B cell (primary cell): ENCODE measurements at regions of chr16 and their contacts with region 1.

Region 1: DNA sequence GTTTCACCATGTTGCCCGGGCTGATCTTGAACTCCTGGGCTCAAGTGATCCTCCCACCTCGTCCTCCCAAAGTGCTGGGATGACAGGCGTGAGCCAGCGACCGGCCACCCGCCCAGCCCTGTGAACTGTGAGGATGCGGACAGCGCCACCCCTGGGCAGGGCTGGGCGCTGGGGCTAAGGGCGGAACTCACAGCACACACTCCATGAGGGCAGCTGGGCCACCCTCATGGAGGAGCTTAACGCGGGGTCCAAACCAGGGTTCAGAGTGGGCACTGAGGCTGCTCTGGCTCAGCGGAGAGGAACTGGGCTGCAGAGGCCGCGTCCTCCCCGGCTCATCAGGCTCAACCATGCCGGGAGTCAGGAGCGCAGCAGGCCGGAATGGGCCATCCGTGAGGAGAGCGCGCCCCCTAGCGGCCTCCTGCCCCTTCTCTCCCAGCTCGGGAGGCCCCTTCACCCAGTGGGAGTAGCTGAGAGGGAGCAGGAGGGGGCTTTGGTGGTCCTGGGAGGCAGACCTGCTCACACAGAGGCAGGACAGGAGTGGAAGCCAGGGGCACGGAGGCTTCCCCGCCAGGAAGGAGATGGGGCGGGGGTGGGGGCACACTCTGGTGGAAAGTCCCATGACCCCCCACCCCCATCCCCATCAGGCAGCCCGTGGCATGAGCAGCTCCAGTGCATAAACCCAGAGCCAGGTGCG is 13.8 kb downstream of the CORO7 start:
- DNase-seq: peak; percentile 79
- ATAC-seq: peak; percentile 75
- H3K4me3 ChIP-seq: no peak overlapping the region
- H3K4me3 Mint-ChIP-seq: no peak overlapping the region
- H3K27ac ChIP-seq: no peak overlapping the region
- H3K27ac Mint-ChIP-seq: no peak overlapping the region
- H3K4me1 ChIP-seq: peaks cover 0 to 6% of the 10 kb centered on the region in 2 donors
- H3K4me1 Mint-ChIP-seq: peaks cover 10% of the 10 kb centered on the region
- H3K27me3 ChIP-seq: no peaks in the 10 kb centered on the region
- H3K27me3 Mint-ChIP-seq: no peaks in the 10 kb centered on the region
- CTCF ChIP-seq: peak; percentile 91

Region 2: GRCh38 chr16:4176612-4177417 is 225.8 kb before region 1 on chr16:
- CTCF ChIA-PET with region 1: no interaction called
- POLR2A ChIA-PET with region 1: no interaction called
- intact Hi-C with region 1: no loop called
- DNase-seq: peak; percentile 24
- ATAC-seq: peak; percentile 98
- H3K4me3 ChIP-seq: no peak overlapping the region
- H3K4me3 Mint-ChIP-seq: no peak overlapping the region
- H3K27ac ChIP-seq: no peak overlapping the region
- H3K27ac Mint-ChIP-seq: no peak overlapping the region
- H3K4me1 ChIP-seq: peaks cover 0 to 6% of the 10 kb centered on the region in 2 donors
- H3K4me1 Mint-ChIP-seq: peaks cover 7% of the 10 kb centered on the region
- H3K27me3 ChIP-seq: peaks cover 0 to 5% (median 0%) of the 10 kb centered on the region in 4 experiments
- H3K27me3 Mint-ChIP-seq: peaks cover 23% of the 10 kb centered on the region
- CTCF ChIP-seq: no peak

Region 3: GRCh38 chr16:4200000-4200780 is 202.4 kb before region 1 on chr16:
- CTCF ChIA-PET with region 1: interaction called, 7 read pairs
- POLR2A ChIA-PET with region 1: no interaction called
- intact Hi-C with region 1: loop called (anchors 5 kb)
- DNase-seq: peak; percentile 38
- ATAC-seq: no peak
- H3K4me3 ChIP-seq: no peak overlapping the region
- H3K4me3 Mint-ChIP-seq: no peak overlapping the region
- H3K27ac ChIP-seq: no peak overlapping the region
- H3K27ac Mint-ChIP-seq: no peak overlapping the region
- H3K4me1 ChIP-seq: no peaks in the 10 kb centered on the region
- H3K4me1 Mint-ChIP-seq: peaks cover 3% of the 10 kb centered on the region
- H3K27me3 ChIP-seq: no peaks in the 10 kb centered on the region
- H3K27me3 Mint-ChIP-seq: peaks cover 7% of the 10 kb centered on the region
- CTCF ChIP-seq: no peak

Region 4: DNA sequence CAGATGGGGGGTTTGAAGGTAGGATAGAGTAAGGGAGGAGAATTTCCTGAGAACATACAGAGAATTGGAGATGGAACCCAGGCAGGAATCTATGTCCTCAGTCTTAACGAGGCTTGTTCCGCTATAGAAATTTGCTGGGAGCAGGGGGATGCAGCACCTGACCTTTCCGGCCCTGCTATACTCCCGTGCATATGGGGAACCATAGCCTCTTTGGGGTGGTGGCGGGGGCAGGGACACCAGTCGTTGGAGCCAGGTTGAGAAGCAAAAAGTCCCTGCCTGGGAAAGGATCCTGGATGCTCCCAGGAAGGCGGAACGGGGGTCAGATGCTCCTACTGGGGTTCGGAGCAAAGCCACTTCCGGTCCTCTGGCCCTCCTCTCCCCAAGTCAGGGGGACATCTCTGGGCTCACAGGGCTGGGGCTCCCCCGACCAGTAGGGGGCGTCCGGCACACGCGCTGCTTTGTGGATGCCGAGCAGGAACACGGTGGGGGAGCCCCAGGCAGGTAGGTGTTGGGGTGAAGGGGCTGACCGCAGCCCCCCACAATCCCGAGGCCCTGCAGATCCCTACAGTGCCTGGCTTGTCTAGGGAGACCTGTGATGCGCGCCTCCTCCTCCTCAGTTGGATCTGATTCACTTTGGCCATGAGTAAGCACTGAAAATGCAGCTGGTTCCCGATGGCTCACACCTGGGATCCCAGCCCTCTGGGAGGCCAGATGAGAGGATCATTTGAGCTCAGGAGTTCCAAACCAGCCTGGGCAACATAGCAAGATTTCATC is 114.3 kb before region 1 on chr16:
- CTCF ChIA-PET with region 1: interaction called, 37 read pairs
- POLR2A ChIA-PET with region 1: no interaction called
- intact Hi-C with region 1: loop called (anchors 1 kb)
- DNase-seq: peak; percentile 87
- ATAC-seq: peak; percentile 98
- H3K4me3 ChIP-seq: no peak overlapping the region
- H3K4me3 Mint-ChIP-seq: no peak overlapping the region
- H3K27ac ChIP-seq: no peak overlapping the region
- H3K27ac Mint-ChIP-seq: no peak overlapping the region
- H3K4me1 ChIP-seq: peaks cover 7 to 8% of the 10 kb centered on the region in 2 donors
- H3K4me1 Mint-ChIP-seq: peaks cover 6% of the 10 kb centered on the region
- H3K27me3 ChIP-seq: peaks cover 0 to 3% (median 0%) of the 10 kb centered on the region in 4 experiments
- H3K27me3 Mint-ChIP-seq: peaks cover 20% of the 10 kb centered on the region
- CTCF ChIP-seq: peak; percentile 97

Region 5: DNA sequence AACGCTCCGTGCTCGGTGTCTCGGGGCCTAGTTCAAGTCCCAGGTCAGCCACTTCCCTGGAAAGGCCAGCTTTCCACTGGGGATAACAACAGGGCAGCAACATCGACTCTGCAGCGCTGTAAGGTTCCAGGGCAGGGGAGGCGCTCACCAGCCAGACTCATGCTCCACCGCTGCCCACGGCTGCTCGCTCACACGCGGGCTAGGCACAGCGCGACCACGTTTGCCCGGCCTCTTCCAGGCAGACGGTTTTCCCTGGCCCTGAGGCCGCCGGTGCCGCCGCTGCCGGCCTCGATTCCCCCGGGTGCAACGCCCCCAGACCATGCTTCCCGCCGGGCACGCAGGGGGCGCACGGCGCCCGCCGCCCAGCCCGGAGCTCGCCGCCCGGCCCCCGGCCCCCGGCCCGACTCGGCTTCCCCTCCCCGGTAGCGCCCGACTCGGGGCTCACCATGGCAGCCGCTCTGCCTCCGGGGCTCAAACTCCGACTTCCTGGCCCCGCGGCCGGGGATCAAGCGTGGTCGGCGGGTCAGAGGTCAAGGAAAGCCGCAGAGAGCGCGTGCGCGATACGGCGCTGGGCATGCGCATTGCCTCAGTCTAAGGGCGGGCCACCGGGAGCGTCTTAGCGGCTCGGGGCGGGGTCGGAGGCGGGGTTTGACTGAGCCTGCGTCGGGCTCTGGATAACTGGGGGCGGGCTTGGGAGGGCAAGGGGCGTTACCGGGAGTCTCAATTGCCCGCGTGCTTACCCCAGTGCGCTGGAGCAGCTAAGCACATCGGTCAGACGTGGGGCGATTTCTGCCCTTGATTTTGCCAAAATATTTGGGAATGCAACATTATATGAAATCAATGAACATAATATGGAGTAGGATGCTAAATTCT is 51.6 kb before region 1 on chr16 and contains the start of gene PAM16:
- CTCF ChIA-PET with region 1: interaction called, 26 read pairs
- POLR2A ChIA-PET with region 1: no interaction called
- intact Hi-C with region 1: no loop called
- DNase-seq: peak; percentile 97
- ATAC-seq: peak; percentile 92
- H3K4me3 ChIP-seq: peak within 1 kb of the TSS; percentile 56 to 84 (median 81)
- H3K4me3 Mint-ChIP-seq: peak within 1 kb of the TSS; percentile 96
- H3K27ac ChIP-seq: peak within 1 kb of the TSS; percentile 57 to 78
- H3K27ac Mint-ChIP-seq: peak within 1 kb of the TSS; percentile 95
- H3K4me1 ChIP-seq: peaks cover 9 to 17% of the 10 kb centered on the region in 2 donors
- H3K4me1 Mint-ChIP-seq: peaks cover 22% of the 10 kb centered on the region
- H3K27me3 ChIP-seq: no peaks in the 10 kb centered on the region
- H3K27me3 Mint-ChIP-seq: no peaks in the 10 kb centered on the region
- CTCF ChIP-seq: peak; percentile 33
- total RNA-seq, gene PAM16: 56.6 and 57.3 TPM in 2 replicates

Region 6: GRCh38 chr16:4365014-4365406 is 37.6 kb before region 1 on chr16:
- CTCF ChIA-PET with region 1: interaction called, 112 read pairs
- POLR2A ChIA-PET with region 1: interaction called, 11 read pairs
- intact Hi-C with region 1: loop called (anchors 1 kb)
- DNase-seq: peak; percentile 86
- ATAC-seq: peak; percentile 89
- H3K4me3 ChIP-seq: no peak overlapping the region
- H3K4me3 Mint-ChIP-seq: peak overlapping the region; percentile 64
- H3K27ac ChIP-seq: peak overlapping the region; percentile 27 to 37
- H3K27ac Mint-ChIP-seq: peak overlapping the region; percentile 78
- H3K4me1 ChIP-seq: peaks cover 6 to 42% of the 10 kb centered on the region in 2 donors
- H3K4me1 Mint-ChIP-seq: peaks cover 25% of the 10 kb centered on the region
- H3K27me3 ChIP-seq: no peaks in the 10 kb centered on the region
- H3K27me3 Mint-ChIP-seq: no peaks in the 10 kb centered on the region
- CTCF ChIP-seq: no peak

Region 7: DNA sequence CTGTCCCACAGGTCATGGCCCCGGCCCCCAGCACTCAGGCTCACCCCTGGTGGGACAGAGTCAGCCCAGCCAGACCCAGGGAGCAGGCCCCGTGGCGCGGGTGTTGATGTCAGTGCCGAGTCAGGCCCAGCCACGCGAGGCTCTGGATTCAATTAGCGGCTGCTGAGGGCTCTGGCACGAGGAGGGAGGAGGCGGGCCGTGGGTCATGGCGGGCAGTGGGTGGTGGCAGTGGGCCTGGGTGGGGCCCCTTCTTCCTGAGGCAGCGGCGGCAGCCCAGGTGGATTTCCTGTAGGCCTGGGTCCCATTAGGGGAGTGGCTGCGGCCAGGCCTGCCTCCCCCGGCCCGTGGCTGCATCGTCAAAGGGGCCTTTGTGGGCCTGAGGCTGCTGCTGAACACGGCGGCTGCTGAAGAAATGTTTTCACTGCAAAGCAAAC is 18.1 kb before region 1 on chr16:
- CTCF ChIA-PET with region 1: interaction called, 27 read pairs
- POLR2A ChIA-PET with region 1: no interaction called
- intact Hi-C with region 1: no loop called
- DNase-seq: no peak
- ATAC-seq: no peak
- H3K4me3 ChIP-seq: no peak overlapping the region
- H3K4me3 Mint-ChIP-seq: no peak overlapping the region
- H3K27ac ChIP-seq: no peak overlapping the region
- H3K27ac Mint-ChIP-seq: no peak overlapping the region
- H3K4me1 ChIP-seq: no peaks in the 10 kb centered on the region
- H3K4me1 Mint-ChIP-seq: no peaks in the 10 kb centered on the region
- H3K27me3 ChIP-seq: no peaks in the 10 kb centered on the region
- H3K27me3 Mint-ChIP-seq: no peaks in the 10 kb centered on the region
- CTCF ChIP-seq: no peak

Region 8: GRCh38 chr16:4550591-4550990 is 148.0 kb after region 1 on chr16:
- CTCF ChIA-PET with region 1: interaction called, 22 read pairs
- POLR2A ChIA-PET with region 1: no interaction called
- intact Hi-C with region 1: no loop called
- DNase-seq: no peak
- ATAC-seq: no peak
- H3K4me3 ChIP-seq: no peak overlapping the region
- H3K4me3 Mint-ChIP-seq: no peak overlapping the region
- H3K27ac ChIP-seq: no peak overlapping the region
- H3K27ac Mint-ChIP-seq: peak overlapping the region; percentile 53
- H3K4me1 ChIP-seq: peaks cover 0 to 9% of the 10 kb centered on the region in 2 donors
- H3K4me1 Mint-ChIP-seq: peaks cover 3% of the 10 kb centered on the region
- H3K27me3 ChIP-seq: no peaks in the 10 kb centered on the region
- H3K27me3 Mint-ChIP-seq: peaks cover 6% of the 10 kb centered on the region
- CTCF ChIP-seq: no peak